CD4-positive, alpha-beta memory T cell (primary cell): ENCODE measurements at regions of chr12 and their contacts with region 1.

Region 1: DNA sequence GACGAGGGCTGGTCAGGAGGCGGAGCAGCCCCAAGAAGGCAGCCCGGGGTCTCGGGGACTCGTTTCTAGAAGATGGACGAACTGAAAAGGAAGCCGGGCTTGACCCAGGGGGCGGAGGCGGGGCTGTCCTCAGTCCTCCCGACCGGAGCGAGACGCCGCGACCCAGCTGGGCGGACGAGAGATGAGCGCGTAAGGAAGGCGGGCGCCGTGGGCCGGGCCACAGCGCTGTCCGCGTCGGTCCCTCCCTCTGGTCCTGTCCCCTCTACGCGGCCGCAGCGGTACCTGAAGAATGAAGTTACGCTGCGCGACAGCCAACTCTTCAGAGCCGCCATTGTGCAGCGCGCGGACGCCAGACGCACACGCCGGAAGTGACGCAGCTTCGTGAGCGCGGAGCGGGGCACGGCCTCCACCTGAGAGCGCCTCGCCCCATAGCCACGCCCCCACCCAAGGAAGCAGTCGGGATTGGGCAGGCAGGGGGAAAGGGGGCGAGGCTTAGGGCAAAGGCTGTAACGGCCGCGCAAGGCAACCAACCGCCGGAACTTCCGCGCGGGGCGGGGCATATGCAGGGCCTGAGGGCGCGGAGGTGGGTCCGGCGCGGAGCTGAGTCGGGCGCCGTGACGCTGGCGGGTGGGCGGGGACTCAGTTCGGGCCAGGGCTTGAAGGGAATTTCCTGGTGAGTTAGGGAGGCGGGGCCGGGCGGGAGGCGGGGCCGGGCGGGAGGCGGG is at the start of gene DIABLO:
- DNase-seq: peak; percentile 100
- H3K4me3 ChIP-seq: peak within 1 kb of the TSS; percentile 63 to 76
- H3K4me3 Mint-ChIP-seq: peak within 1 kb of the TSS; percentile 88 to 93 (median 91)
- H3K27ac ChIP-seq: peak within 1 kb of the TSS; percentile 99
- H3K27ac Mint-ChIP-seq: peak within 1 kb of the TSS; percentile 90 to 98 (median 96)
- H3K4me1 ChIP-seq: peaks cover 36% of the 10 kb centered on the region
- H3K4me1 Mint-ChIP-seq: peaks cover 25 to 56% (median 39%) of the 10 kb centered on the region in 4 donors
- H3K27me3 ChIP-seq: no peaks in the 10 kb centered on the region
- H3K27me3 Mint-ChIP-seq: no peaks in the 10 kb centered on the region
- total RNA-seq, gene DIABLO: 40.0 to 44.1 TPM

Region 2: GRCh38 chr12:121467115-121467793 is 758.6 kb before region 1 on chr12:
- CTCF ChIA-PET with region 1: no interaction called
- POLR2A ChIA-PET with region 1: no interaction called
- intact Hi-C with region 1: loop called (anchors 5 kb)
- DNase-seq: peak; percentile 85 to 91 (median 87)
- H3K4me3 ChIP-seq: peak overlapping the region in 1 of 2 donors; percentile 35
- H3K4me3 Mint-ChIP-seq: peak overlapping the region in 5 of 8 donors; percentile 21 to 74 (median 47)
- H3K27ac ChIP-seq: peak overlapping the region; percentile 42
- H3K27ac Mint-ChIP-seq: no peak overlapping the region
- H3K4me1 ChIP-seq: peaks cover 25% of the 10 kb centered on the region
- H3K4me1 Mint-ChIP-seq: peaks cover 17 to 30% (median 22%) of the 10 kb centered on the region in 4 donors
- H3K27me3 ChIP-seq: no peaks in the 10 kb centered on the region
- H3K27me3 Mint-ChIP-seq: no peaks in the 10 kb centered on the region

Region 3: DNA sequence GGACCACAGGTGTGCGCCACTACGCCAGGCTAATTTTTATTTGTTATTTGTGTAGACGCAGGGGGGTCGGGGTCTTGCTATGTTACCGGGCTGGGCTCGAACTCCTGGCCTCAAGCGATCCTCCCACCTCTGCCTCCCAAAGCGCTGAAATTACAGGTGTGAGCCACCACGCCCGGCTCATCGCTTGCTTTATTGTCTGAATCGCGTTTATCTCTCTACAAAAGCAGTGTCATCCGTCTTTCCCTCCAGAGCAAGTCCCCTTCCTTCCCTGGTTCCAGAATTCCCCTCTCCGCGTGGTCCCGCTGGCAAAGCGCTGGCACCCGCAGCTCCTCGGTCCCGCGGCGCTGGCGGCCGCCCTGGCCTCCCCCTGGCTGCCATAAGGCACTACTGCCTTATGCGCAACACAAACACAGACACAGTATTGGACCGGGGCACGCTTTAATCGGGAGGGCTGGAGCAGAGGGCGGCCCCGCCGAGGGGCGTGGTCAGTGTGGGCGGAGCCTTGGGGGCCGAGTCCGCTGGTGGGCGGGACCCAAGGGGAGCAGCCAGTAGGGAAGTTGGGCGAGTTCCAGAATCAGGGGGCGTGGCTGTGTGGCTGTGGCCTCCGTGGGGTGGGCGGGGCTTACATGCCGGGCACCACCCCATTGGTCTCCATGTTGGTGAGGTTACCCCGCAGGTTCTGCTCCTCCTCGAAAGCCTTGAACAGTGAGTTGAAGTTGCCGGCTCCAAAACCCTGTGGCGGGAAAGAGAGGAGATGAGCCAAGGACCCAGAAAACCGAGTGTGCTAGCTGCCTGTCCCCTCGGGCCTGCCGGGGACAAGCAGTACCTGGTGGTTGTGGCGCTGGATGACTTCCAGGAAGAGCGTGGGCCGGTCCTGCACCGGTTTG is 386.5 kb before region 1 on chr12:
- CTCF ChIA-PET with region 1: no interaction called
- POLR2A ChIA-PET with region 1: no interaction called
- intact Hi-C with region 1: loop called (anchors 1 kb)
- DNase-seq: peak; percentile 99 to 100 (median 99)
- H3K4me3 ChIP-seq: peak overlapping the region; percentile 70 to 95
- H3K4me3 Mint-ChIP-seq: peak overlapping the region; percentile 96 to 99 (median 99)
- H3K27ac ChIP-seq: peak overlapping the region; percentile 46
- H3K27ac Mint-ChIP-seq: peak overlapping the region; percentile 86 to 97 (median 93)
- H3K4me1 ChIP-seq: peaks cover 9% of the 10 kb centered on the region
- H3K4me1 Mint-ChIP-seq: peaks cover 10 to 23% (median 14%) of the 10 kb centered on the region in 4 donors
- H3K27me3 ChIP-seq: no peaks in the 10 kb centered on the region
- H3K27me3 Mint-ChIP-seq: no peaks in the 10 kb centered on the region

Region 4: GRCh38 chr12:122203301-122204166 is 22.3 kb before region 1 on chr12 and contains the start of gene B3GNT4:
- CTCF ChIA-PET with region 1: interaction called, 3 read pairs
- POLR2A ChIA-PET with region 1: interaction called, 13 read pairs
- intact Hi-C with region 1: no loop called
- DNase-seq: peak; percentile 68 to 74 (median 71)
- H3K4me3 ChIP-seq: peak within 1 kb of the TSS in 1 of 2 donors; percentile 55
- H3K4me3 Mint-ChIP-seq: peak within 1 kb of the TSS; percentile 80 to 94 (median 84)
- H3K27ac ChIP-seq: no peak within 1 kb of the TSS
- H3K27ac Mint-ChIP-seq: peak within 1 kb of the TSS in 5 of 7 donors; percentile 19 to 82 (median 24)
- H3K4me1 ChIP-seq: peaks cover 9% of the 10 kb centered on the region
- H3K4me1 Mint-ChIP-seq: peaks cover 5 to 20% (median 12%) of the 10 kb centered on the region in 4 donors
- H3K27me3 ChIP-seq: no peaks in the 10 kb centered on the region
- H3K27me3 Mint-ChIP-seq: peaks cover 0 to 8% of the 10 kb centered on the region in 2 donors
- total RNA-seq, gene B3GNT4: 0.93 to 1.4 TPM

Region 5: GRCh38 chr12:122265931-122266771 is 40.3 kb after region 1 on chr12 and contains the start of gene VPS33A:
- CTCF ChIA-PET with region 1: interaction called, 17 read pairs
- POLR2A ChIA-PET with region 1: interaction called, 68 read pairs
- intact Hi-C with region 1: loop called (anchors 1 kb)
- DNase-seq: peak; percentile 88 to 93 (median 91)
- H3K4me3 ChIP-seq: peak within 1 kb of the TSS; percentile 70 to 99
- H3K4me3 Mint-ChIP-seq: peak within 1 kb of the TSS; percentile 96 to 99 (median 98)
- H3K27ac ChIP-seq: peak within 1 kb of the TSS; percentile 81
- H3K27ac Mint-ChIP-seq: peak within 1 kb of the TSS; percentile 99 to 100 (median 99)
- H3K4me1 ChIP-seq: peaks cover 23% of the 10 kb centered on the region
- H3K4me1 Mint-ChIP-seq: peaks cover 14 to 39% (median 25%) of the 10 kb centered on the region in 4 donors
- H3K27me3 ChIP-seq: no peaks in the 10 kb centered on the region
- H3K27me3 Mint-ChIP-seq: peaks cover 0 to 4% of the 10 kb centered on the region in 2 donors
- total RNA-seq, gene VPS33A: 40.5 to 42.6 TPM

Region 6: GRCh38 chr12:122526683-122527477 is 301.0 kb after region 1 on chr12 and contains the starts of genes KNTC1 and RSRC2:
- CTCF ChIA-PET with region 1: no interaction called
- POLR2A ChIA-PET with region 1: interaction called, 7 read pairs
- intact Hi-C with region 1: loop called (anchors 1 kb)
- DNase-seq: peak; percentile 98 to 99 (median 99)
- H3K4me3 ChIP-seq: peak within 1 kb of the TSS; percentile 85 to 88
- H3K4me3 Mint-ChIP-seq: no peak within 1 kb of the TSS
- H3K27ac ChIP-seq: peak within 1 kb of the TSS; percentile 98
- H3K27ac Mint-ChIP-seq: no peak within 1 kb of the TSS
- H3K4me1 ChIP-seq: peaks cover 52% of the 10 kb centered on the region
- H3K4me1 Mint-ChIP-seq: peaks cover 22 to 37% (median 30%) of the 10 kb centered on the region in 4 donors
- H3K27me3 ChIP-seq: no peaks in the 10 kb centered on the region
- H3K27me3 Mint-ChIP-seq: no peaks in the 10 kb centered on the region
- total RNA-seq, gene KNTC1: 29.7 to 30.9 TPM
- total RNA-seq, gene RSRC2: 138 to 141 TPM